ENCODE measurements at regions of chr1 and their contacts with region 1.

Region 1: DNA sequence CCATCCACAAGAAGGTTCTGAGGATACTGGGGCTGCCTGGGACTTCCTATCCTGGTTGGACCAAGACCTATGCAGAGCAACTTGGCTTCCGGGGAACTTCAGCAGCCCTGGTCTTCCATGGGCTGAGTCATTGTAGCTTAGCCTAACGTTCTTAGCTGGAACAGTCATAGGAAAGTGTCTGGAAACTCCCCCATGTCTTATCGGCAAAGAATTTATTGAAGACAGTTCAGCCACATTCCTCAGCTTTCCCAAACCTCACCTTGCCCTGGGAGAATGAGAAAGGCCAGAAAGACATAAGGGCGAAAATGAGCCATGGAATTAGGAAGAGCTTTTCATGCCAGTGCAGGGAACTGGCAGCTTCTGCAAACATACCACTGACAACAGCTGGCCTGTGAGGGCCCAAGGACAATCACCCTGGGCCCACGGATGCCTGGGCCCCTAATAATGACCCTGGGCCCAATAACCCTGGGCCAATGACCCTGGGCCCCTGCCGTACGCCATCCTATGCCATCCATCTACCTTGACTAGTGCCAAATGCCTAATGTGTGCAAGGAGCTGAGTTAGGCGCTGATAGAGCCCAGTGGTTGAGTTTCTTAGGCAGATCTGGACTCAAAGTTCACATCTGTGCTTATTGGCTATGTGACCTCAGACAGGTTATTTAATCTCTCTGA is 114.4 kb upstream of the GADD45A start:
- DNase-seq: peak; percentile 77 to 99
- H3K4me3 ChIP-seq: peak overlapping the region; percentile 4; the same call in 1 of the 2 replicates
- H3K27ac ChIP-seq: peak overlapping the region; percentile 94
- H3K4me1 ChIP-seq: peaks cover 47% of the 10 kb centered on the region
- H3K27me3 ChIP-seq: no peaks in the 10 kb centered on the region
- CTCF ChIP-seq: no peak

Region 2: DNA sequence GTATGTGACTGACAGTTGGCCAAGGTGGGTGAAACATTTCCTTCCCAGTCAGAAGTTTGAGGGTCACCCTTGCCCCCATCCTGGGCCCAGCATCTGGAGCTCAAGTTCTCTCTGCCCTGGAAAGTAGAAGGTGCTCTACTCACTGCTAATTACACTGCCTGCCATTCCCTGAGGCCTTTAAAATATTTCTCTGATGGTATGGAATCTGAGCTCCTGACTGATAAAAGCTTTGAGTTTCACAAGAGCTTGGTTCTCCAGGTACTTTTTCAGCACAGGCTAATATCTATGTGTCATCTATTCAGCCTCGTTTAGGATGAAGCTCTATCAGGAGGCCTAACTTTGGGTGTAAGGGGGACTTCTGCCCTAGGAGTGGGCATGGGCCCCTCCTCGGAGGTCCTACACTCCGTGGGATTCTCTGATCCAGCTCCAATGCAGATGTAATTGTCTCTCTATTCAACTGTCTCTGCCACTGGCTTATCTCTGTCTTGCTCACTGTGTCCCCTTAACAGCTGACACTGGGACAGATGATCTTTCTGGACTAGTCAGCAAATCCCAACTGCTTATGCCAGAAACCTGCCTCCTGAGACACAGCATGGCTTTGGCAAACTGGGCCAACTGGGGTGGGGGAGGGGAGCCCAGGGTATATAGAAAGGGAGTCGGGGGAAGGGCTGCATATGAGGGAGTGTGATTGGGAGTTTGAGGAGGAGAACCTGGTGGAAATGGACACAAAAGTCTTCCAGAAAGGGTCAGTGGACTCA is 10.2 kb after region 1 on chr1:
- CTCF ChIA-PET with region 1: interaction called, 3 read pairs
- POLR2A ChIA-PET with region 1: interaction called, 6 read pairs
- intact Hi-C with region 1: loop called (anchors 1 kb)
- DNase-seq: peak in 1 of 2 experiments; percentile 94
- H3K4me3 ChIP-seq: no peak overlapping the region
- H3K27ac ChIP-seq: peak overlapping the region; percentile 85
- H3K4me1 ChIP-seq: peaks cover 59% of the 10 kb centered on the region
- H3K27me3 ChIP-seq: no peaks in the 10 kb centered on the region
- CTCF ChIP-seq: no peak

Region 3: GRCh38 chr1:67626495-67627235 is 56.1 kb after region 1 on chr1:
- CTCF ChIA-PET with region 1: no interaction called
- POLR2A ChIA-PET with region 1: no interaction called
- intact Hi-C with region 1: loop called (anchors 5 kb)
- DNase-seq: peak; percentile 22 to 93
- H3K4me3 ChIP-seq: no peak overlapping the region
- H3K27ac ChIP-seq: peak overlapping the region; percentile 87
- H3K4me1 ChIP-seq: peaks cover 40% of the 10 kb centered on the region
- H3K27me3 ChIP-seq: no peaks in the 10 kb centered on the region
- CTCF ChIP-seq: no peak

Region 4: GRCh38 chr1:67646145-67647035 is 75.8 kb after region 1 on chr1:
- CTCF ChIA-PET with region 1: no interaction called
- POLR2A ChIA-PET with region 1: interaction called, 11 read pairs
- intact Hi-C with region 1: no loop called
- DNase-seq: peak; percentile 46 to 49
- H3K4me3 ChIP-seq: no peak overlapping the region
- H3K27ac ChIP-seq: no peak overlapping the region
- H3K4me1 ChIP-seq: peaks cover 19% of the 10 kb centered on the region
- H3K27me3 ChIP-seq: no peaks in the 10 kb centered on the region
- CTCF ChIP-seq: no peak